K562 (cell line): ENCODE measurements at regions of chr1 and their contacts with region 1.

Region 1: GRCh38 chr1:26045722-26046248 is at the start of gene SLC30A2:
- DNase-seq: peak in 2 of 4 experiments; percentile 46 to 55
- ATAC-seq: peak; percentile 9
- H3K4me3 ChIP-seq: no peak within 1 kb of the TSS
- H3K27ac ChIP-seq: no peak within 1 kb of the TSS
- H3K4me1 ChIP-seq: peaks cover 36 to 45% of the 10 kb centered on the region in 2 experiments
- H3K27me3 ChIP-seq: no peaks in the 10 kb centered on the region
- CTCF ChIP-seq: peak in 1 of 3 experiments; percentile 4; a peak in 1 of 6 replicates
- EP300 ChIP-seq: no peak
- POLR2A ChIP-seq: no peak
- RAD21 ChIP-seq: no peak
- polyA plus RNA-seq, gene SLC30A2: 0.01 to 0.06 TPM

Region 2: GRCh38 chr1:25458541-25459298 is 587.1 kb before region 1 on chr1:
- CTCF ChIA-PET with region 1: no interaction called
- POLR2A ChIA-PET with region 1: no interaction called
- in situ Hi-C with region 1: no loop called
- intact Hi-C with region 1: no loop called
- DNase-seq: no peak
- ATAC-seq: no peak
- H3K4me3 ChIP-seq: no peak overlapping the region
- H3K27ac ChIP-seq: no peak overlapping the region
- H3K4me1 ChIP-seq: peaks cover 0 to 9% of the 10 kb centered on the region in 2 experiments; a peak in 3 of 5 replicates
- H3K27me3 ChIP-seq: no peaks in the 10 kb centered on the region
- CTCF ChIP-seq: no peak
- EP300 ChIP-seq: no peak
- POLR2A ChIP-seq: no peak
- RAD21 ChIP-seq: no peak

Region 3: DNA sequence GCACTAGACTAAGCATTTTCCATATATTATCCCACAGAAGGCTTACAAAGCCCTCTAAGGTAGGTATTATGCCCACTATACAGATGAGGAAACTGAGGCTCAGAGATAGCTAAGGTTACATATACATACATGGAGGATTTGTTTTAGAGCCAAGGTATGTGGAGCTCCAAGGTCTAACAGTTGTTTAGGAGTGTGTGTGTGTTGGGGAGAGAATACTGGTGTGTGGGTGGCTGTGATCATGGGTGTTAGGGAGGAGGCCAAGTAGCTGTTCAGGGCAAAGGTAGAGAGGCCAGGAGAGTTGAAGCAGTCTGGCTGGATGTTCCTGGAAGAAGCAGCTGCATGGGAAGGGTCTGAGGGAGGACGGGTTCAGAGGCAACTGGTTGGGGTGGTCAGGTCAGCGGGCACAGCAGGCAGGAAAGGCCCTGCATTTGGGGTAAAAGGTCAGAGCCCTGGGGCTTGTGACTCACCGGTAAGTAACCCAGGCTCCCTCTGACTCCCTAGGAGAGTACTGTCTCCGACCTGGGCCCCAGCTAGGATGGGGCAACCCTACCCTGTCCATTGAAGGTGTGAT is 507.5 kb before region 1 on chr1:
- CTCF ChIA-PET with region 1: no interaction called
- POLR2A ChIA-PET with region 1: no interaction called
- in situ Hi-C with region 1: no loop called
- intact Hi-C with region 1: no loop called
- DNase-seq: no peak
- ATAC-seq: no peak
- H3K4me3 ChIP-seq: no peak overlapping the region
- H3K27ac ChIP-seq: no peak overlapping the region
- H3K4me1 ChIP-seq: peaks cover 16 to 28% of the 10 kb centered on the region in 2 experiments; a peak in 3 of 5 replicates
- H3K27me3 ChIP-seq: no peaks in the 10 kb centered on the region
- CTCF ChIP-seq: no peak
- EP300 ChIP-seq: no peak
- POLR2A ChIP-seq: no peak
- RAD21 ChIP-seq: no peak

Region 4: GRCh38 chr1:26021647-26022403 is 24.0 kb before region 1 on chr1 and contains the start of gene EXTL1:
- CTCF ChIA-PET with region 1: no interaction called
- POLR2A ChIA-PET with region 1: no interaction called
- in situ Hi-C with region 1: no loop called
- intact Hi-C with region 1: no loop called
- DNase-seq: no peak
- ATAC-seq: peak; percentile 65
- H3K4me3 ChIP-seq: no peak within 1 kb of the TSS
- H3K27ac ChIP-seq: no peak within 1 kb of the TSS
- H3K4me1 ChIP-seq: peaks cover 6 to 27% of the 10 kb centered on the region in 2 experiments
- H3K27me3 ChIP-seq: no peaks in the 10 kb centered on the region
- CTCF ChIP-seq: no peak
- EP300 ChIP-seq: no peak
- POLR2A ChIP-seq: no peak
- RAD21 ChIP-seq: no peak
- polyA plus RNA-seq, gene EXTL1: not detected

Region 5: DNA sequence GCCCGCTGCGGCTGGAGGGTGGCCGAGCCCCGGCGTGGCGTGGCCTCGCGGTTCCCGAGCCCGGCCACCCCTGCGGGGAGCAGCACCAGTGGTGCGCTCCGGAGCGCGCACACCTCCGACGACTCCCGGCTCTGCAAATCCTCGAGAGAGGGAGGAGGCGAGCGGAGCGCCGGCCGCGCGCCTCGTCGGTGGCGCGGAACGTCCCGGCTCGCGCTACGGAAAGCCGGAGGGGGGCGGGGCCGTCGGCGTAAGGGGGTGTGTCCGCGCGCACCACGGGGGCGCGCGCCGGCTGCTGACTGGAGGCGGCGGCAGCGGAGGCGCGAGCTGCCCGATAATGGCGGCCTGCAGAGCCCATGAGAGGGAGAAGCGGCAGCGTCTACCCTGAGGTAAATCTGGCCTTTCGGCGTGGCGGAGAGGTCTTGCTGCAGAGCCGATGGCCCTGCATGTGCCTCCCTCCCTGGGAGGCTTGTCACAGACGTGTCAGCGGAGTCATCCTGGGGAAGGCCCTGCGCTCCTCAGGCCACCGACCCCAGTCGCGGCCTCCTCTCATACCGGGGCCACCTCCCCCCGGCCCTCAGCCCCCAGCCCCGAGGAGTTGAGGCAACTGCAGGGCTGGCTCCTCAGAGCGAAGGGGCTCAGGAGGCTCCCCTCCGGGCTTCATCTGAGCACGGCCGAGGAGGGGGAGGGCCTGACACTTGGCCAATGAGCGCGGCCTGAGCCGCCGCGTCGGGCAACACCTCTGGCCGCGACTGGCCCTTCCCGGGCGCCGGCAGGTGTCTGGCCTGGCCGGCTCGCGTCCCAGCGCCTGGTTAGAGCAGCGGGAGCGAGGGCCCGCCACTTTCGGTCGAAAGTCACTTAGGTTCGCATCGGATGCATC is 66.0 kb after region 1 on chr1 and contains the start of gene PDIK1L:
- CTCF ChIA-PET with region 1: no interaction called
- POLR2A ChIA-PET with region 1: no interaction called
- in situ Hi-C with region 1: loop called (anchors 5 kb)
- intact Hi-C with region 1: no loop called
- DNase-seq: peak; percentile 90 to 98 (median 94)
- ATAC-seq: peak; percentile 85
- H3K4me3 ChIP-seq: peak within 1 kb of the TSS; percentile 94
- H3K27ac ChIP-seq: peak within 1 kb of the TSS; percentile 92
- H3K4me1 ChIP-seq: peaks cover 13 to 29% of the 10 kb centered on the region in 2 experiments
- H3K27me3 ChIP-seq: no peaks in the 10 kb centered on the region
- CTCF ChIP-seq: 0 out of 6 replicates have a peak, but pooled peaks of 2 of the 3 experiments have one; percentile 4 to 10
- EP300 ChIP-seq: no peak; the same call in 1 of the 2 replicates
- POLR2A ChIP-seq: peak; percentile 84
- RAD21 ChIP-seq: peak in 1 of 2 experiments; percentile 14; a peak in 1 of 4 replicates
- polyA plus RNA-seq, gene PDIK1L: 14.7 to 21.5 TPM